Calu3 (cell line): ENCODE measurements at regions of chr18 and their contacts with region 1.

Region 1: DNA sequence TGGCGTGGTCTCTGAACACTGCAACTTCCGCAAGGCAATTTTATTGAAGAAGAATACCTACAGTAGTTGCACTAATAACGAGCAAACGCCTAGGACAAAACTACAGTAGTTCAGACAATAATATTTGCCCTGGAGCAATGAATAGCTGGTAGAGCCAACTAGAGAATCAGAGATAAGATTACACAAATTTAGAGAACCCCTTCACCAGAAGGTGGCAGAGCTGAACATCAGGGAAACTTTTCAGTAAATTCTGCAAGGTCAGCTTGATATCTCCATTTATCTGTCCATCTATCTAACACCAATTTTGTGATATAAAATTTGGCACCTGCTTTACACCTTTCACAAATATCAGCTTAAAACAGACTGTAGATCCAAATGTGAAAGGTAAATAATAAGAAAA is 43.8 kb downstream of the CDH19 start:
- DNase-seq: peak; percentile 61
- H3K4me3 Mint-ChIP-seq: no peak overlapping the region
- H3K27ac Mint-ChIP-seq: peak overlapping the region; percentile 50
- H3K4me1 Mint-ChIP-seq: no peaks in the 10 kb centered on the region
- H3K27me3 Mint-ChIP-seq: no peaks in the 10 kb centered on the region
- CTCF ChIP-seq: peak; percentile 53

Region 2: DNA sequence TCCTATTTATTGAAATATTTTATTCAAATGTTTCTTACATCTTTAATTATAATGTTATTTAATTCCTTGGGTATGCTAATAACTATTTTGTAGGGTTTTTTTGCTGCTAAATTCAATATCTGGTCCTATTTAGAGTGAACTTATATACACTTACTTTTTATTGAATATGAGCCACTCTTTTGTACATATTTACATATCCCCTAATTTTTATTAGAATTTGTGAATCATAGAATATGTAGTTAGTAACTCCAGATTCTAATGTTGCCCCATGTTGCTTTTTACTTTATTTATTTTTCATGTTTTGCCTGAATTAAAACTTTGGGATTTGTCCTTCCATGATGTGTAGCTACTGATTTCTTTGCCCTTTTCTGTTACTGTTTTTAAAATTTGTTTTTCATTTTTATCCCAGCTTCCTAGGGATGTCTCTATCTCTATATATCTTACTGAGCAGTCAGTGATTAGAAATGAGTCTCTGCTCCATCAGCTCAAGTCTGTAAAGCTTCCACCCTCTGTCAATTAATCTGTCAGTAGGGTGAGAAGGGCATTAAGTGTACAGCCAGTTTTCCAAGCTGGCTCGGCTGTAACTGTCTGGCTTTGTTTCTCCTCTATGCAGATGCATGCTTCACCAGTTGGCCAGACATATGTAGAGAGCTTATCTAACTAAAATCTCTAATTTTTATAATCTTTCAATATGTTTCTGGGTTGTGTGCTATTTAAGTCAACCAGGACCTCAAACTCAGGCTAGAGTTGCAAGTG is 213.1 kb before region 1 on chr18:
- CTCF ChIA-PET with region 1: no interaction called
- intact Hi-C with region 1: loop called (anchors 10 kb)
- DNase-seq: no peak
- H3K4me3 Mint-ChIP-seq: no peak overlapping the region
- H3K27ac Mint-ChIP-seq: no peak overlapping the region
- H3K4me1 Mint-ChIP-seq: no peaks in the 10 kb centered on the region
- H3K27me3 Mint-ChIP-seq: no peaks in the 10 kb centered on the region
- CTCF ChIP-seq: no peak

Region 3: DNA sequence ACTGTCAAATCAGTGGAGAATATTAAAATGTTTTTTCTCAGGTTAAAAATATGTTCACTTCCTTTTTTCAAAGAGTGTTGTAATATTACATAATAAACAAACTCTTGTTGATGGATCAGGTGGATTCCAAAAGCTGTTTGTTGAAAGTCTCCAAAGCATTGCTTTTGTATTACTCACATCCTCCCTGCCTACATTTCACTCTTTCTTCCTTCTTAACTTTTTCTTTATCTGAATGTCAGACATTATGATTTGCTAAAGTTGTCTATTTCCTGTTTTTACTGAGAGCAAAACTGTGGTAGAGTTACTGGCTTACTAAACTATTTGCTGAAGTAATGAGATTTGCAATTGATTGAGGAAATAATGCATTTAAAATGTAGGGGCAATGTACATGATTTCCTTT is 48.3 kb before region 1 on chr18:
- CTCF ChIA-PET with region 1: no interaction called
- intact Hi-C with region 1: loop called (anchors 2 kb)
- DNase-seq: peak; percentile 24
- H3K4me3 Mint-ChIP-seq: peak overlapping the region; percentile 1
- H3K27ac Mint-ChIP-seq: peak overlapping the region; percentile 90
- H3K4me1 Mint-ChIP-seq: peaks cover 43% of the 10 kb centered on the region
- H3K27me3 Mint-ChIP-seq: no peaks in the 10 kb centered on the region
- CTCF ChIP-seq: no peak

Region 4: DNA sequence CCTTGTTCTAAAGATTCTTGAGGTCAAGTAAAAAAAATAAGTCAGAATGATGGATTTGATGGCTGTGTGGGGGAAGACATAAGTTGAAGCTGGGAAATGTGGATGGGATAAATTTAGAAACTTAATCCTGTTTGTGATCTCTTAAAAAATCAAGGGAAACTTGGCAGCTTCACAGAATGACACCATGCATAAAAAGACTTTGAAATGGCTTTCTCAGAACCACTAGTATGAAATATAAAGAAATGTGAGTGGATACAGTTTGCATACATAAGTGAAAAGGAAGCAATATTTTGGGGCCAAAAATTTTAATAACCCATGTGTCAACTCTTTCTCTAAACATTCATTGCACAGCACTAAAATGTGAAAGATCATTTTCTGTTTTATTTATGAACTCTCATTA is 22.1 kb after region 1 on chr18:
- CTCF ChIA-PET with region 1: no interaction called
- intact Hi-C with region 1: no loop called
- DNase-seq: no peak
- H3K4me3 Mint-ChIP-seq: no peak overlapping the region
- H3K27ac Mint-ChIP-seq: no peak overlapping the region
- H3K4me1 Mint-ChIP-seq: no peaks in the 10 kb centered on the region
- H3K27me3 Mint-ChIP-seq: no peaks in the 10 kb centered on the region
- CTCF ChIP-seq: no peak

Region 5: DNA sequence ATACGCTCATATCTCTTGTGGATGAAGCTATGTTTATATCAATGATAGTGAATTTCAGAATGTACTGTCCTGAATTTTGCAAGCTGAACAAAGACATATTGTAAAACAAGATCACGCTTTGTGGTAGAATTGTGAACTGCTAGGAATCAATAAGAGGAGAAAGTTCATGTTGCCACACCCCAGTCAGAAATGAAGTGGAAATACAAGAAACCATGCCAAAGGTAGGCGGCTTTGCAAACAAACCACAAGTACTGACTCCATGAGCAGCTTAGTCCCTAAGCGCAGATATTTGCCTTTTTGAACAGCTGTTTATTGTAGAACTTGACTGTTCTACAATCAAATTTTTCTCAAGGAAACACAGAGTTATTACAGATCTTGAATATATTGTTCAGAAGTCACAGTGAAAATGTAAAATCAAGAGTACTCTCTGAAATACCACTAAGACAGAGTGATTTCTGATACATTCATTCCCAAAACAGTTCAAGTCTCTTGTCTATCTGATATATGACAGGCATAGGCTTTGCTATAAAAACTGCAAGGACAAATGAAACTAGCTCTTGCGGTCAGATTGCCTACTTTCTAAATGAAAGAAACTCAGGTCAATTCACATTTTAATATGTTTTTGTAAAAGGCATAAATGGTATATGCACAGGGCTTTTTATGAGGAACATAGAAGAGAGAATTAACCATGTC is 164.7 kb after region 1 on chr18:
- CTCF ChIA-PET with region 1: interaction called, 6 read pairs
- intact Hi-C with region 1: loop called (anchors 5 kb)
- DNase-seq: peak; percentile 71
- H3K4me3 Mint-ChIP-seq: peak overlapping the region; percentile 30
- H3K27ac Mint-ChIP-seq: peak overlapping the region; percentile 92
- H3K4me1 Mint-ChIP-seq: peaks cover 31% of the 10 kb centered on the region
- H3K27me3 Mint-ChIP-seq: no peaks in the 10 kb centered on the region
- CTCF ChIP-seq: peak; percentile 15

Region 6: GRCh38 chr18:66749030-66749429 is 188.9 kb after region 1 on chr18:
- CTCF ChIA-PET with region 1: interaction called, 7 read pairs
- intact Hi-C with region 1: loop called (anchors 1 kb)
- DNase-seq: peak; percentile 34
- H3K4me3 Mint-ChIP-seq: no peak overlapping the region
- H3K27ac Mint-ChIP-seq: no peak overlapping the region
- H3K4me1 Mint-ChIP-seq: peaks cover 25% of the 10 kb centered on the region
- H3K27me3 Mint-ChIP-seq: no peaks in the 10 kb centered on the region
- CTCF ChIP-seq: no peak

Region 7: GRCh38 chr18:66819235-66819634 is 259.1 kb after region 1 on chr18:
- CTCF ChIA-PET with region 1: no interaction called
- intact Hi-C with region 1: no loop called
- DNase-seq: no peak
- H3K4me3 Mint-ChIP-seq: no peak overlapping the region
- H3K27ac Mint-ChIP-seq: no peak overlapping the region
- H3K4me1 Mint-ChIP-seq: no peaks in the 10 kb centered on the region
- H3K27me3 Mint-ChIP-seq: no peaks in the 10 kb centered on the region
- CTCF ChIP-seq: no peak

Region 8: GRCh38 chr18:66872277-66872676 is 312.2 kb after region 1 on chr18:
- CTCF ChIA-PET with region 1: no interaction called
- intact Hi-C with region 1: loop called (anchors 1 kb)
- DNase-seq: no peak
- H3K4me3 Mint-ChIP-seq: no peak overlapping the region
- H3K27ac Mint-ChIP-seq: no peak overlapping the region
- H3K4me1 Mint-ChIP-seq: peaks cover 13% of the 10 kb centered on the region
- H3K27me3 Mint-ChIP-seq: no peaks in the 10 kb centered on the region
- CTCF ChIP-seq: no peak

Region 9: GRCh38 chr18:67199993-67200617 is 640.0 kb after region 1 on chr18:
- CTCF ChIA-PET with region 1: no interaction called
- intact Hi-C with region 1: loop called (anchors 5 kb)
- DNase-seq: peak; percentile 13
- H3K4me3 Mint-ChIP-seq: no peak overlapping the region
- H3K27ac Mint-ChIP-seq: no peak overlapping the region
- H3K4me1 Mint-ChIP-seq: no peaks in the 10 kb centered on the region
- H3K27me3 Mint-ChIP-seq: no peaks in the 10 kb centered on the region
- CTCF ChIP-seq: no peak